MCF 10A (cell line): ENCODE measurements at regions of chrX and their contacts with region 1.

Region 1: GRCh38 chrX:47854474-47854873 is 17.8 kb downstream of the ZNF81 start:
- DNase-seq: peak; percentile 17
- H3K4me3 Mint-ChIP-seq: no peak overlapping the region
- H3K27ac Mint-ChIP-seq: no peak overlapping the region
- H3K4me1 Mint-ChIP-seq: no peaks in the 10 kb centered on the region
- H3K27me3 Mint-ChIP-seq: peaks cover 10% of the 10 kb centered on the region
- CTCF ChIP-seq: peak; percentile 21

Region 2: DNA sequence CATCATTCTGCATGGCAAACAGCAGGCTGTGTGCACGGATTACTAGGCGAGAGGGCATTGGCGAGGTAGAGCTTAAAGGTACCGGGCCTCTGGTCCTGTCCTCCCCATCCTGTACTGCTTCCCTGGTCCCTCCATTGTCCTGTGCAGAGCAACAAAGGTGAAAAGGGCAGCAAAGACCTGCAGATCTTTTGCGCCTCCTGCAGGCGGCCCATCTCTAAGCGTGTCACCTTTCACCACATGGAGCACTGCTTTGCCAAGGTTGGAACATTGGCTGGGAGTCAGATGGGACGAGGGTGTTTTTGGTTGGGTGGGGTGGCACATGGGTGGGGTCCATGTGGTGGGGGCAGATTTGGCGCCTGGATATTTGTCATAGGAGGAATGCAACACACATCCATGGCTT is 130.8 kb before region 1 on chrX:
- CTCF ChIA-PET with region 1: no interaction called
- POLR2A ChIA-PET with region 1: no interaction called
- intact Hi-C with region 1: no loop called
- DNase-seq: no peak
- H3K4me3 Mint-ChIP-seq: no peak overlapping the region
- H3K27ac Mint-ChIP-seq: no peak overlapping the region
- H3K4me1 Mint-ChIP-seq: no peaks in the 10 kb centered on the region
- H3K27me3 Mint-ChIP-seq: peaks cover 15% of the 10 kb centered on the region
- CTCF ChIP-seq: no peak

Region 3: DNA sequence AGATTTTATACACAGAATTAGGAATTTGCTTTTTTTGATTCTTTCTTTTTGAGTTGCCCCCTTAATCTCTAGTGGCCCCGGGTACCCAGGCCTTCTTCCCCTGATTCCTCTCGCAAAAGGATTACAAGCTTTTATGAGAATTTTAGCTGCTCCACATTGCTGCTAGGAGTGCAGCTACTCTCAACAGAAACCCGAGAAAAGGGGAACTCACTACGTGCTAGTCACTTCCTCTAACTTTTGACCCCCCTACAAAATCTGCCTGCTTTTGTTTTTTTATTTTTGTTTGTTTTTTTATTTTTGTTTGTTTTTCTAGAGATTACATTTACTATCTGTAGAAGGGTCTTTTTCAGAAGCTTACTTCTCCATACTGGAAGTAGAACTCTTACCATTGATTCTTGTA is 46.4 kb after region 1 on chrX:
- CTCF ChIA-PET with region 1: no interaction called
- POLR2A ChIA-PET with region 1: no interaction called
- intact Hi-C with region 1: no loop called
- DNase-seq: no peak
- H3K4me3 Mint-ChIP-seq: no peak overlapping the region
- H3K27ac Mint-ChIP-seq: no peak overlapping the region
- H3K4me1 Mint-ChIP-seq: no peaks in the 10 kb centered on the region
- H3K27me3 Mint-ChIP-seq: no peaks in the 10 kb centered on the region
- CTCF ChIP-seq: no peak

Region 4: DNA sequence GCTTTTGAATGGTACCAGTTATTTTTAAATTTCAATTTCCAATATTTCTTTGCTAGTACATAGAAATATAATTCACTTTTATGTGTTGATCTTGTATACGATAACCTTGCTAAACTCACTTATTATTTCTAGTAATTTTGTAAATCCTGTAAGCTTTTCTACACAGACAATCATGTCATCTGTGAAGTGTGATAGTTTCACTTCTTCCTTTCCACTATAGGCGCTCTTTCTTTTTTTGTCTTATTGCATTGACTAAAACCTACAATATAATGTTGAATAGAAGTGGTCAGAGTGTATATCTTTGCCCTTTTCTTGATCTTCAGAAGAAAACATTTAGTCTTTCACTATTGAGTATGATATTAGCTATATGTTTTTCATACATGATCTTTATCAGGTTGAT is 72.7 kb after region 1 on chrX:
- CTCF ChIA-PET with region 1: no interaction called
- POLR2A ChIA-PET with region 1: no interaction called
- intact Hi-C with region 1: no loop called
- DNase-seq: no peak
- H3K4me3 Mint-ChIP-seq: no peak overlapping the region
- H3K27ac Mint-ChIP-seq: no peak overlapping the region
- H3K4me1 Mint-ChIP-seq: no peaks in the 10 kb centered on the region
- H3K27me3 Mint-ChIP-seq: no peaks in the 10 kb centered on the region
- CTCF ChIP-seq: no peak

Region 5: GRCh38 chrX:47941423-47941822 is 86.9 kb after region 1 on chrX:
- CTCF ChIA-PET with region 1: no interaction called
- POLR2A ChIA-PET with region 1: no interaction called
- intact Hi-C with region 1: no loop called
- DNase-seq: no peak
- H3K4me3 Mint-ChIP-seq: no peak overlapping the region
- H3K27ac Mint-ChIP-seq: no peak overlapping the region
- H3K4me1 Mint-ChIP-seq: no peaks in the 10 kb centered on the region
- H3K27me3 Mint-ChIP-seq: no peaks in the 10 kb centered on the region
- CTCF ChIP-seq: no peak

Region 6: DNA sequence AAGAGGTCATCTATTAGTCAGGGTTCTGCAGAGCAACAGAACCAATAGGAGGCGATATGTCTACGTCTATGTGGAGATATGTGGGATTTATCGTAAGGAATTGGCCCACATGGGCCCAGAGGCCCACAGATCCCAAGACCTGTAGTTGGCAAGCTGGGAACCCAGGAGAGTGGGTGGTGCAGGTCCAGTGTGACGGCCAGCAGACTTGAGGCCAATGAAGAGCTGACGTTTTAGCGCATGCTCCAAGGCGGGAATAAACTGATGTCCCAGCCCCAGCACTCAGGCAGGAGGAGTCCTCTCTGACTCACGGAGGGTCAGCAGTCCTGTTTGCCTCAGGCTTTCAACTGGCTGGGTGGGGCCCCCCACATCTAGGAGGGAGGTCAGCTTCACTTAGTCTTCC is 173.6 kb after region 1 on chrX:
- CTCF ChIA-PET with region 1: interaction called, 20 read pairs
- POLR2A ChIA-PET with region 1: no interaction called
- intact Hi-C with region 1: no loop called
- DNase-seq: no peak
- H3K4me3 Mint-ChIP-seq: no peak overlapping the region
- H3K27ac Mint-ChIP-seq: no peak overlapping the region
- H3K4me1 Mint-ChIP-seq: peaks cover 5% of the 10 kb centered on the region
- H3K27me3 Mint-ChIP-seq: no peaks in the 10 kb centered on the region
- CTCF ChIP-seq: no peak